ENCODE measurements at regions of chr11 and their contacts with region 1.

Region 1: DNA sequence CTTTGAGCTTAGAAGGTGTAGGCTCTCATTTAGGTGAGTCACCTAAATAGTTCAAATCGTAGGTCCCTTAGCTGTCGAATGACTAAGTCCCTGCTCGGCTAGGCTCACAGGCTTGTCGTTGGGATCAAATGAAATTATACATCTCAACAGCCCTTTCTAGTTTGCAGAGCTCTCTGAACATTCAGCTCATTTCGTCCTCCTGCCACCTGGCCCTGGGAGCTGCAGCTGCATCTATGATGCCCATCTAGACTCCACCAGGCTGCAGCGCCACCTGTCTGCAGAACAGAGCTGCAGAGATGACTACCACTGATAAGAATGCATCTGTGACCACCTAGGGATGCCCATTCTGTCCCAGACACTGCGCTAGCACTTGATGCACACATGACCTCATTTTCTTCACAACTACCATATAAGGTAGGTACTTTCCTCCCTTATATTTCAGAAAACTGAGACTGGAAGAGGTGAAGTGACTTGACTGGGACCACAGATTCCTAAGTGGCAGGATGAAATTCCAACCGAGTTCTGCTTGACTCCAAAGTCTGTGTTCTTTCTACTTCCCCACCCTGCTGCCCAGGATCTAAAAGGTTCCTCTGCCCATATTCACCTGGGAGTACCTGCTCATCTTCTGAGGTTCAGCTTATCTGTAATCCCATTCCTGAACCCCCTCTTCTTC is 141.1 kb upstream of the NARS2 start:
- DNase-seq: peak; percentile 52 to 65
- ATAC-seq: peak; percentile 92 to 99
- H3K4me3 ChIP-seq: no peak overlapping the region
- H3K27ac ChIP-seq: no peak overlapping the region
- H3K4me1 ChIP-seq: peaks cover 10% of the 10 kb centered on the region; the same call in 2 of the 3 replicates
- CTCF ChIP-seq: peak; percentile 68
- EP300 ChIP-seq: no peak
- POLR2A ChIP-seq: no peak
- RAD21 ChIP-seq: peak; percentile 41 to 57; a peak in 4 of 5 replicates

Region 2: DNA sequence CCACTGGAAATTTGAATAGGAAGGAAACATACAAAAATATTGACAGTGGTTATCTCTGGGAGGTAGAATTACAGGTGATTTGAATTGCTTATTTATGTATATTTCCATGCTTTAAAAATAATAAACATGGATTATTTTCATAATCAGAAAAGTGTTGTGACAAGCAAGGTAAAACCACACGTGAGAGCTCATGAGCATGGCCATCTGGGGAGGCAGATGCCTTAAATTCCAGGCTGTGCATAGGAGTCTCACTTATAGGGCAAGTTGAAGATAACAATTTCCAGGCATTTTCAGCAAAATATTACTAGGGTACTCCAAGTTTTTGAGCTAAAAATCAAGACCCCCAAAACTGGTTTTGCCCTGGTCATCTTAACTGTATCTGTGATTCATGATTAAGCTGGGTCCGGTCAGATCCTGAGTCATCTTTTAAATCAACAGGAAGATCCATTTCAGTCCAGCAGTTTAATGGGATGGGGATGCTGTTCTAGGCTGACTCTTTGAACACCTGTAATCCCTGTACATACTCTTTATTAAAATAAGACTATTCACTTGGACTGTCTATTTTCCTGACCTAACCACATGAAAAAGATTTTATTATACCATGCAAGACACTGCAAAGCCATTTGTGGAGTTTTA is 25.3 kb before region 1 on chr11:
- CTCF ChIA-PET with region 1: interaction called, 12 read pairs
- POLR2A ChIA-PET with region 1: no interaction called
- DNase-seq: no peak
- ATAC-seq: no peak
- H3K4me3 ChIP-seq: no peak overlapping the region
- H3K27ac ChIP-seq: no peak overlapping the region
- H3K4me1 ChIP-seq: no peaks in the 10 kb centered on the region
- CTCF ChIP-seq: no peak
- EP300 ChIP-seq: no peak
- POLR2A ChIP-seq: no peak
- RAD21 ChIP-seq: no peak

Region 3: GRCh38 chr11:78698612-78699011 is 17.2 kb before region 1 on chr11:
- CTCF ChIA-PET with region 1: interaction called, 23 read pairs
- POLR2A ChIA-PET with region 1: no interaction called
- DNase-seq: no peak
- ATAC-seq: no peak
- H3K4me3 ChIP-seq: no peak overlapping the region
- H3K27ac ChIP-seq: no peak overlapping the region
- H3K4me1 ChIP-seq: no peaks in the 10 kb centered on the region
- CTCF ChIP-seq: no peak
- EP300 ChIP-seq: no peak
- POLR2A ChIP-seq: no peak
- RAD21 ChIP-seq: no peak

Region 4: DNA sequence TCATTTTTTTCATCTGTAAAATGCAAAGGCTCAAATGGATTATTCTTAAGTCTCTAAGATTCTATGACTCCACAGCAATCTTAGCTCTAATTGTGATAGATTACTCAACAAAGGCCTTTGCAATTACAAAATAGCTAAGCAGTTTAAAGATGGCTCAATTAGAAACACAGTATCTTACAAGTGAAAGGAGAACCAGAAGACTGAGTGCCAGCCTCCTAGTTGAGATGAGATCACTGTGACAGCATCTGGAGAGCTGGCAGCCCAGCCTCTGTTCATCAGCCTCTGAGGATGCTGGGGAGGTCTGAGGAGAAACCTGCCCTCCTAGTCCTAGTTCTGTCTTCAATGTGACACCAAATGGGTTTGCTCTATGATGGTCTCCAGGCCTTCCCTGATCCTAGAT is 17.3 kb after region 1 on chr11:
- CTCF ChIA-PET with region 1: interaction called, 13 read pairs
- POLR2A ChIA-PET with region 1: no interaction called
- DNase-seq: no peak
- ATAC-seq: no peak
- H3K4me3 ChIP-seq: no peak overlapping the region
- H3K27ac ChIP-seq: no peak overlapping the region
- H3K4me1 ChIP-seq: no peaks in the 10 kb centered on the region
- CTCF ChIP-seq: no peak
- EP300 ChIP-seq: no peak
- POLR2A ChIP-seq: no peak
- RAD21 ChIP-seq: no peak